Esophagus muscularis mucosa (tissue), 4 donors: ENCODE measurements at regions of chr10 and their contacts with region 1.

Region 1: DNA sequence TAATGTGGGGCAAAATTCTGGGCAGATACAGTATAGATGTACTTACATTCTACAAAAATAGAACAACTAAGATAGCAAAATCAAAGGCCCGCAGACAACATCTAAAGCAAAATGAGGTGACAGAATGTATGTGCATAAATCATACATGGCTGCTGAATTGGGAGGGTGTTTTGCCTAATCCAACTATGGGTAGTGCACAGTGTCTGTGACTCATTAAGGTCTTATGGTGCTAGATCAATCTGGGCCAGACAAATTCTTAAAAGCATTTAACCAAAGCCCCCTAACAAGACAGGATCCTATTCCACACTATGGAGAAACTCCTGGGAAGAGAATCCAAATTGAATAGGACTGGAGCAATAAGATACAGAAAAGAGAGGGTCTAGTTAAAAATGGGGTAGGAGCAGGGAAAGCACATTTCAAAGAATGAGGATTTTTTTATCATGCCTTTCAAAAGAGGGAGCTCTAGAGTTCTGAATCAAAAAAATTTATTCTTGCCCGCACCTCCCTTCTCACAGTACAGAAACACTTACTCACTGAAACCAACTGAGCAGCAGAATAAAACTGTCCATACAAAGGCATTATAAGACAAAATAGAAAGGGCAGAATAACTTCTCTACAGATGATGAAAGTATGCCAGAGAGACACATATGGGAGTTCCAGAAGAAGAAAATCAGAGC is 181.3 kb downstream of the RNLS start:
- DNase-seq: no peak
- H3K4me3 ChIP-seq: no peak overlapping the region
- H3K27ac ChIP-seq: no peak overlapping the region
- H3K4me1 ChIP-seq: no peaks in the 10 kb centered on the region
- H3K27me3 ChIP-seq: no peaks in the 10 kb centered on the region
- CTCF ChIP-seq: peak in 2 of 3 experiments; percentile 32 to 35
- EP300 ChIP-seq: no peak
- POLR2A ChIP-seq: no peak

Region 2: GRCh38 chr10:88553116-88553752 is 151.4 kb after region 1 on chr10:
- intact Hi-C with region 1: loop called (anchors 5 kb)
- DNase-seq: no peak
- H3K4me3 ChIP-seq: no peak overlapping the region
- H3K27ac ChIP-seq: no peak overlapping the region
- H3K4me1 ChIP-seq: no peaks in the 10 kb centered on the region
- H3K27me3 ChIP-seq: no peaks in the 10 kb centered on the region
- CTCF ChIP-seq: peak; percentile 74 to 79 (median 79)
- EP300 ChIP-seq: no peak
- POLR2A ChIP-seq: no peak